Calu3 (cell line): ENCODE measurements at regions of chr10 and their contacts with region 1.

Region 1: DNA sequence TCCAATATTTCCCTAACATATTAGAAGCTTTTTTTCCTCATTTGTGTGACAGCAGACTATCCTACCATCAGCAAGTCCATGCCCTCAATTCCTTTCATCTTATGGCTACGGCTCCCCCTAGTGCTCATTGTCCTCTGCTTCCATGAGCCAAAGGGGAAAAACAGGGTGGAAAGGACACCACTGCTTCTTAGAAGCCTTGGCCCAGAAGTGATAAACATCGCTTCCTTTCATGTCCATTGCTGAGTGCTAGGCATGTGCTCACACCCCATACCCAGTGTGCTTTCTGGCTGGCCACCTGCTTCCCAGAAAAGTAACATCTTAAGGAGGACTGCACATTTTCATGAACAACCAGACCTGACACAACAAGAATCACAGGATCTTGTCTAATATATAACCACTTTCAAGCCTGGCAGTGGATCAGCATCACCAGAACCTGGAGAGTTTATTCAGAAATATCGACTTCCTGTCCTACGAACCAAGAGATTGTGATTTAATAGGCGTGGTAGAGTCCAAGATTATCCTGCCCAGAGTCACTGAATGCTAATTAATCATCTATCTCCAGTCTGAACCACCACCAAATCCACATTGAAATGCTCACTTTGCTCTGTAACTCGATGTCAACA is 650.5 kb upstream of the SORCS1 start:
- DNase-seq: peak; percentile 10
- H3K4me3 Mint-ChIP-seq: no peak overlapping the region
- H3K27ac Mint-ChIP-seq: no peak overlapping the region
- H3K4me1 Mint-ChIP-seq: peaks cover 8% of the 10 kb centered on the region
- H3K27me3 Mint-ChIP-seq: no peaks in the 10 kb centered on the region
- CTCF ChIP-seq: peak; percentile 14

Region 2: DNA sequence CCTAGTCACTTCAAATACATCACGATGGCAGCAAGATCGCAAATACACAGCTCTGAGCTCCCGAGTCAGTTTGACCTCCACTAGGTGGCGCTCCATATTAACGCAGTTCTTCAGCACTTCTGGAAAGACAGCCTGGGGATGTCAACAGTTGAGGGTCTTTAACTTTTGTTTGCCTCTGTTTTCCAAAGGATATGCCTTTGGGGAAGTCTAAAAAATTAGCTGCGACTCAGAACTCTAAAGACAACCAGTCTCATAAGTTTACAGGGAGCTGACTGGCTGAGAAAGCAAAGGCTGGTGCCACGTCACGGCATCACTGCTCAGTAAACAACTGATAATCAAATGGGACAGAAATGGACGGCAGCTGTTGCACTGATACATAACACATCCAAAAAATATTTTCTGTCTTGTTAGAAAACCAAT is 1109.3 kb before region 1 on chr10:
- CTCF ChIA-PET with region 1: no interaction called
- intact Hi-C with region 1: loop called (anchors 10 kb)
- DNase-seq: peak; percentile 50
- H3K4me3 Mint-ChIP-seq: no peak overlapping the region
- H3K27ac Mint-ChIP-seq: peak overlapping the region; percentile 28
- H3K4me1 Mint-ChIP-seq: no peaks in the 10 kb centered on the region
- H3K27me3 Mint-ChIP-seq: peaks cover 7% of the 10 kb centered on the region
- CTCF ChIP-seq: peak; percentile 40

Region 3: DNA sequence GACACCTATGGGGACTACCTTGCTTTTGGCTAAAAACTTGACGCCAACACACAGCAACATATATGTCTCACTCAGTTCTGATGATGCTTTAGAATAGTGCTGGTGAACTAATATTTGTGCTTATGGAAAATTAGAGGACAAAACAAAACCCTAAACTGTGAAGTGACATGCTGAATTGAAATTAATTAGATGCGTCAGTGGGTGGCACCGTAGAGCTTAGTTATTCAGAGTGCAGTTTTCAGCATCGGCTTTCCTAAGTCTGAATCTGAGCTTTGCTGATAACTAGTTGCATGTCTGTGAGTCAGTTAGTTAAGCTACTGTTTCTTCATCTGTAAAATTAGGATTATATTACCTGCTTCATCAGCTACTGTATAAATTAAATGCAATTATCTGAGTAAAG is 405.5 kb before region 1 on chr10:
- CTCF ChIA-PET with region 1: no interaction called
- intact Hi-C with region 1: loop called (anchors 2 kb)
- DNase-seq: peak; percentile 2
- H3K4me3 Mint-ChIP-seq: no peak overlapping the region
- H3K27ac Mint-ChIP-seq: no peak overlapping the region
- H3K4me1 Mint-ChIP-seq: no peaks in the 10 kb centered on the region
- H3K27me3 Mint-ChIP-seq: no peaks in the 10 kb centered on the region
- CTCF ChIP-seq: no peak

Region 4: DNA sequence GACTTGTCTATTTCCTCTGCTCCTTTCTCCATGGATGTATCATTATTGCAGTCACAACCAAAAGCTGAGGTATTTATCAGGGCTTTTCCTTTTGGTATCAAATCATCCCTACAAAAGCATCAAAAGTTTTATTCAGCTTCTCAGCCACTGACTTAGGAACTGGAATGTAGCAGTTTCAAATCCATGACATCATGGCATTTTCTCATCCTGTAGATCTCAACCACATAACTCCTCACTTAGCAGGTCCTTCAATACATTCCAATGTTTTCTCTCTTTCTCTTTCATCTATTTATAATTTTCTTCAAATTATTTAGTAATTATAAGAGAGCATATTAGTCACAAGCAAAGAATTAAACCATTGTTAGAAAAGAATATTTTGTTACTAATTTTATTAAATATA is 113.0 kb before region 1 on chr10:
- CTCF ChIA-PET with region 1: no interaction called
- intact Hi-C with region 1: no loop called
- DNase-seq: no peak
- H3K4me3 Mint-ChIP-seq: no peak overlapping the region
- H3K27ac Mint-ChIP-seq: no peak overlapping the region
- H3K4me1 Mint-ChIP-seq: no peaks in the 10 kb centered on the region
- H3K27me3 Mint-ChIP-seq: no peaks in the 10 kb centered on the region
- CTCF ChIP-seq: no peak

Region 5: GRCh38 chr10:107986571-107986970 is 171.6 kb after region 1 on chr10:
- CTCF ChIA-PET with region 1: no interaction called
- intact Hi-C with region 1: no loop called
- DNase-seq: no peak
- H3K4me3 Mint-ChIP-seq: no peak overlapping the region
- H3K27ac Mint-ChIP-seq: no peak overlapping the region
- H3K4me1 Mint-ChIP-seq: no peaks in the 10 kb centered on the region
- H3K27me3 Mint-ChIP-seq: no peaks in the 10 kb centered on the region
- CTCF ChIP-seq: no peak

Region 6: GRCh38 chr10:108132303-108132702 is 317.3 kb after region 1 on chr10:
- CTCF ChIA-PET with region 1: no interaction called
- intact Hi-C with region 1: no loop called
- DNase-seq: no peak
- H3K4me3 Mint-ChIP-seq: no peak overlapping the region
- H3K27ac Mint-ChIP-seq: no peak overlapping the region
- H3K4me1 Mint-ChIP-seq: no peaks in the 10 kb centered on the region
- H3K27me3 Mint-ChIP-seq: no peaks in the 10 kb centered on the region
- CTCF ChIP-seq: no peak